Mammary epithelial cell (primary cell): ENCODE measurements at regions of chr1 and their contacts with region 1.

Region 1: GRCh38 chr1:117758444-117759316 is 152.8 kb downstream of the TENT5C start:
- DNase-seq: peak; percentile 68
- H3K4me3 ChIP-seq: peak overlapping the region; percentile 31 to 51 (median 46)
- H3K27ac ChIP-seq: no peak overlapping the region
- H3K4me1 ChIP-seq: peaks cover 7% of the 10 kb centered on the region
- H3K27me3 ChIP-seq: no peaks in the 10 kb centered on the region
- CTCF ChIP-seq: peak; percentile 82 to 86

Region 2: GRCh38 chr1:117312225-117313138 is 446.2 kb before region 1 on chr1:
- CTCF ChIA-PET with region 1: no interaction called
- dilution Hi-C with region 1: no loop called
- in situ Hi-C with region 1: no loop called
- intact Hi-C with region 1: loop called (anchors 5 kb)
- DNase-seq: peak; percentile 37
- H3K4me3 ChIP-seq: no peak overlapping the region
- H3K27ac ChIP-seq: no peak overlapping the region
- H3K4me1 ChIP-seq: no peaks in the 10 kb centered on the region
- H3K27me3 ChIP-seq: peaks cover 2% of the 10 kb centered on the region
- CTCF ChIP-seq: peak; percentile 75 to 78

Region 3: DNA sequence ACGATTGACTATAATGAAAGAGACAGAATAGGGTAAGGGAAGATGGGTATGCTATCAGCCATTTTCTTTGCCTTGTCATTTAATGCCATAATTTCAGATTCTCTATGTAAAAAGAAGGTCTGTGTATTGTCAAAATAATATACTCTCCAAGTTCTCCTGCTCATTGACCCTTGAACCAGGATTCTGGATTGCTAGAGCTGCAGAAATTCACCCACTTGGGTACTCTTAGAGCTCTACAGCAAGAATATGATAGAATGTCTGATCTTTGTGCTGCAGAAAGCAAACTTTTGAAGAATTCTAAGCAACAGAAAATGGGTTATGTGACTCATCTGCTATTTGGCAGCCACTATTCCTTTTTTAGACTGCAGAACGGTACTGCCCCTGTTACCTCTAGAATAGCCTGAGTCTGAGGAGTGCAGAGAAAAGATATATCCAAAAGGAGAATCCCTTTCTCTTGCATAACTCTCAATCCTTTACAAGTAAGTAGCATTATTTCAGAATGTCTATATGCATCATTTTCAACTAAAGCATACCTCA is 231.0 kb before region 1 on chr1:
- CTCF ChIA-PET with region 1: no interaction called
- dilution Hi-C with region 1: no loop called
- in situ Hi-C with region 1: loop called (anchors 10 kb)
- intact Hi-C with region 1: no loop called
- DNase-seq: no peak
- H3K4me3 ChIP-seq: no peak overlapping the region
- H3K27ac ChIP-seq: no peak overlapping the region
- H3K4me1 ChIP-seq: no peaks in the 10 kb centered on the region
- H3K27me3 ChIP-seq: no peaks in the 10 kb centered on the region
- CTCF ChIP-seq: no peak

Region 4: GRCh38 chr1:117605774-117606648 is 152.7 kb before region 1 on chr1 and contains the start of gene TENT5C:
- CTCF ChIA-PET with region 1: interaction called, 4 read pairs
- dilution Hi-C with region 1: no loop called
- in situ Hi-C with region 1: no loop called
- intact Hi-C with region 1: loop called (anchors 5 kb)
- DNase-seq: peak; percentile 96
- H3K4me3 ChIP-seq: peak within 1 kb of the TSS; percentile 71 to 77 (median 77)
- H3K27ac ChIP-seq: peak within 1 kb of the TSS; percentile 67
- H3K4me1 ChIP-seq: peaks cover 22% of the 10 kb centered on the region
- H3K27me3 ChIP-seq: peaks cover 4% of the 10 kb centered on the region
- CTCF ChIP-seq: no peak
- total RNA-seq, gene TENT5C: 0.17 to 0.35 TPM